MCF 10A (cell line): ENCODE measurements at regions of chr19 and their contacts with region 1.

Region 1: GRCh38 chr19:32598022-32598421 is 17.0 kb downstream of the PDCD5 start:
- DNase-seq: no peak
- H3K4me3 Mint-ChIP-seq: no peak overlapping the region
- H3K27ac Mint-ChIP-seq: no peak overlapping the region
- H3K4me1 Mint-ChIP-seq: no peaks in the 10 kb centered on the region
- H3K27me3 Mint-ChIP-seq: no peaks in the 10 kb centered on the region
- CTCF ChIP-seq: no peak

Region 2: DNA sequence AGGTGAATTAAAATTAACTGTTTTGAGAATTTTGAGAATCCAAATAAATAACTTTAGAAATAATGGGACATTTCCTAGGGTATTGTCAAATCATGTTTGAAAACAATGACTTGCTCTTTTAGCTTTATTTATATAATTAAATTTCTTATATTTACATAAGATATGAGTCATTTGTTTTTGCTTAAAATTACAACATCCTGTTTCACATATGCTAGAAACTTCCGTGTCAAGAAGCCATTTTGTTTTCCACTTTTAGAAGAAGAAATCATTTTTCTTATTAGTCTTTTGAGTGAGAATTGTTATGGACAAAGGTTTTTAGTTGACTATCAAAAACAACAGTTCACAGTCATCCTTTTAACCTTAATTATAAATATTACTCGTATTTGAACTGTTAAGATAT is 144.3 kb before region 1 on chr19:
- CTCF ChIA-PET with region 1: no interaction called
- POLR2A ChIA-PET with region 1: no interaction called
- intact Hi-C with region 1: no loop called
- DNase-seq: peak; percentile 27
- H3K4me3 Mint-ChIP-seq: no peak overlapping the region
- H3K27ac Mint-ChIP-seq: no peak overlapping the region
- H3K4me1 Mint-ChIP-seq: no peaks in the 10 kb centered on the region
- H3K27me3 Mint-ChIP-seq: no peaks in the 10 kb centered on the region
- CTCF ChIP-seq: no peak

Region 3: GRCh38 chr19:32580901-32581703 is 16.9 kb before region 1 on chr19 and contains the start of gene PDCD5:
- CTCF ChIA-PET with region 1: interaction called, 15 read pairs
- POLR2A ChIA-PET with region 1: interaction called, 6 read pairs
- intact Hi-C with region 1: no loop called
- DNase-seq: peak; percentile 95
- H3K4me3 Mint-ChIP-seq: peak within 1 kb of the TSS; percentile 90
- H3K27ac Mint-ChIP-seq: peak within 1 kb of the TSS; percentile 83
- H3K4me1 Mint-ChIP-seq: peaks cover 7% of the 10 kb centered on the region
- H3K27me3 Mint-ChIP-seq: no peaks in the 10 kb centered on the region
- CTCF ChIP-seq: no peak
- total RNA-seq, gene PDCD5: 261 and 290 TPM in 2 replicates